HepG2 (cell line): ENCODE measurements at regions of chr10 and their contacts with region 1.

Region 1: DNA sequence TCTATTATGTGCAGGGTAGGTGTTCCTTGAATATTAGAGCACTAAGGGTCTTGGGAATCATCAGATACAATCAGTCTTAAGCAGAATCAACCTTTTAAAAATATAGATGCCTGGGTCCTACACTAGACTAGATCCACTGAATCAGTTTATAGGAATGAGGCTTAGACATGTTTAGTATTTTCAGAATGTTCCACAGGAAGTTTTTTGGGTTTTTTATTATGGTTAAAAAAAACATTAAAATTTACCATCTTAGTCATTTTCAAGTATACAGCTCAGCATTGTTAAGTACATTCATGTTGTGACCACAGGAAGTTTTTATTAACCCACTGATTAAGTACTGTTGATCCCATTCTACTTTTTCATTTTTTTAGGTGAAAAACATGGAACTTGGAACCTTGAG is 135.7 kb downstream of the LCOR start:
- DNase-seq: no peak
- ATAC-seq: no peak
- H3K4me3 ChIP-seq: no peak overlapping the region
- H3K27ac ChIP-seq: no peak overlapping the region
- H3K4me1 ChIP-seq: peaks cover 36% of the 10 kb centered on the region
- H3K27me3 ChIP-seq: no peaks in the 10 kb centered on the region
- CTCF ChIP-seq: no peak
- EP300 ChIP-seq: no peak
- POLR2A ChIP-seq: no peak
- RAD21 ChIP-seq: no peak

Region 2: DNA sequence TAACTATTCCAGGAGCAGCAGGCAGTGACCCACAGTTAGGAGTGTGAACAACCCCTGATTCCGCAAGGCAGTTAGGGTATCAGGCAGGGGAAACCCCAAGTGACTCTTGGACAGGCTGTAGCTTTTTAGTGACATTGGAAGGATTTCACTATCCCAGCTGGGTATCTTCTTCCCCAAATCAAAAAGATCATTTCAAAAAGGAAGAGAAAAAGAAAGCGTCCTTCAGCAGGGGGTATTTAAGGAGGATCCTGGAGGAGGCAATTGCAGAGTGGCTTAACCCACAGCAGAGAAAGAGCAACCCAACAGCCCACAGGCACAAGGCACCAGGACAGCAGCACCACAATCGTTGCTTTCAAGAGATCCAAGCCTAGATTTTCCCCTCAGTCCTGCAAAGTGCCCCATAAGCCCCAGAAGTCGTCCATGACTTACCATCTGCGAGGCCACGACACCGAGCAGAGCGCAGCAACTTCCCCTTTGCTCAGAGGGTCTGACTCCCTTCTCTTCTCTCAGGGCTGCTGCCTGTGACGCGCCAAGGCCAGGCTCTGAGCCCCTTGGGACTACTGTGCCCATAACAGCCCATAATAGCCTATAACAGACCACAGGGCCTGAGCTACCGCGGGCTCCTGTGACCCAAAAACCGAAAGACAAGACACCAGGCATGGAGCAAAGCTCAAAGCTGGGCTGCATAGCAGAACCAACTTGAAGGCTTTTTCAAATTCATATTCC is 267.3 kb before region 1 on chr10:
- CTCF ChIA-PET with region 1: no interaction called
- POLR2A ChIA-PET with region 1: no interaction called
- in situ Hi-C with region 1: no loop called
- intact Hi-C with region 1: loop called (anchors 5 kb)
- DNase-seq: no peak
- ATAC-seq: no peak
- H3K4me3 ChIP-seq: no peak overlapping the region
- H3K27ac ChIP-seq: no peak overlapping the region
- H3K4me1 ChIP-seq: no peaks in the 10 kb centered on the region
- H3K27me3 ChIP-seq: no peaks in the 10 kb centered on the region
- CTCF ChIP-seq: no peak
- EP300 ChIP-seq: no peak
- POLR2A ChIP-seq: no peak
- RAD21 ChIP-seq: no peak

Region 3: GRCh38 chr10:96935148-96935547 is 32.7 kb before region 1 on chr10:
- CTCF ChIA-PET with region 1: no interaction called
- POLR2A ChIA-PET with region 1: no interaction called
- in situ Hi-C with region 1: no loop called
- intact Hi-C with region 1: no loop called
- DNase-seq: no peak
- ATAC-seq: no peak
- H3K4me3 ChIP-seq: no peak overlapping the region
- H3K27ac ChIP-seq: no peak overlapping the region
- H3K4me1 ChIP-seq: no peaks in the 10 kb centered on the region
- H3K27me3 ChIP-seq: no peaks in the 10 kb centered on the region
- CTCF ChIP-seq: no peak
- EP300 ChIP-seq: no peak
- POLR2A ChIP-seq: no peak
- RAD21 ChIP-seq: no peak

Region 4: GRCh38 chr10:96987842-96988175 is 20.0 kb after region 1 on chr10:
- CTCF ChIA-PET with region 1: no interaction called
- POLR2A ChIA-PET with region 1: no interaction called
- in situ Hi-C with region 1: no loop called
- intact Hi-C with region 1: no loop called
- DNase-seq: no peak
- ATAC-seq: no peak
- H3K4me3 ChIP-seq: no peak overlapping the region
- H3K27ac ChIP-seq: no peak overlapping the region
- H3K4me1 ChIP-seq: no peaks in the 10 kb centered on the region
- H3K27me3 ChIP-seq: no peaks in the 10 kb centered on the region
- CTCF ChIP-seq: no peak
- EP300 ChIP-seq: no peak
- POLR2A ChIP-seq: no peak
- RAD21 ChIP-seq: no peak

Region 5: GRCh38 chr10:96998329-96998888 is 30.6 kb after region 1 on chr10:
- CTCF ChIA-PET with region 1: no interaction called
- POLR2A ChIA-PET with region 1: no interaction called
- in situ Hi-C with region 1: no loop called
- intact Hi-C with region 1: loop called (anchors 1 kb)
- DNase-seq: peak; percentile 77
- ATAC-seq: peak; percentile 50
- H3K4me3 ChIP-seq: peak overlapping the region; percentile 26 to 62 (median 42); a peak in 5 of 6 replicates
- H3K27ac ChIP-seq: peak overlapping the region; percentile 79
- H3K4me1 ChIP-seq: peaks cover 52% of the 10 kb centered on the region
- H3K27me3 ChIP-seq: no peaks in the 10 kb centered on the region; a peak in 1 of 5 replicates
- CTCF ChIP-seq: peak; percentile 24; the same call in 1 of the 2 replicates
- EP300 ChIP-seq: 0 out of 4 replicates have a peak, but pooled peaks of 1 of the 2 experiments have one; percentile 21
- POLR2A ChIP-seq: no peak
- RAD21 ChIP-seq: no peak